Motor neuron (in vitro differentiated cells): ENCODE measurements at regions of chr18 and their contacts with region 1.

Region 1: DNA sequence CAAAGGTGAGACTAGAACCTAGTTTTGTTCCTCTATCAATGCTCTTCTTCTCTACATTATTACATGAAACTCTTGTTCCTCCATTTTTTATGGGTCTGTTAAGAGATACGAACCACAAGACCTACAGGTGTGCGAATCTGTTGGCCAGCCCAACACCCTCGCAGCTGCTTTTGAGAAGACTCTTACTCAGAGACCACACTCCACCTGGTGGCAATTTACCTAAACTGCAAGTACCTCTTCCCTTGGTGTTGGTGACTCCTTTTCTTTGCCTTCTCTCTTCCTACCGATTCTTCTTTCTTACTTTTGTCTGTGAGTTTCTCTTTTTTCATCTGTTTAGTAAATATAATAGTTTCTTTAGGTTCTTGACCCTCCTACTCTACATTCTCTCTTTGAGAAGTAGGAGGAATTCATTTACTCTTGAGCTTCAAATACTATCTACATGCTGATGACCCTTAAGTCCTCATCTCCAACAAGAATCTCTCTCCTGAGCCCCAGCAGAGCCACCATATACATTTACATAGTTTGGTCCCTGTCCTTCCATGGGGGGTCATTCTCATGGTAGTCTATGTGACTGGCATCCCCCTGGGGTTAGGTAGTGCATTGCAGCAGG is 81.8 kb upstream of the GAREM1 start:
- ATAC-seq: peak in 3 of 8 experiments; percentile 74 to 76 (median 75)
- H3K4me3 ChIP-seq: no peak overlapping the region
- H3K27ac ChIP-seq: no peak overlapping the region
- H3K4me1 ChIP-seq: peaks cover 0 to 6% of the 10 kb centered on the region in 2 donors

Region 2: DNA sequence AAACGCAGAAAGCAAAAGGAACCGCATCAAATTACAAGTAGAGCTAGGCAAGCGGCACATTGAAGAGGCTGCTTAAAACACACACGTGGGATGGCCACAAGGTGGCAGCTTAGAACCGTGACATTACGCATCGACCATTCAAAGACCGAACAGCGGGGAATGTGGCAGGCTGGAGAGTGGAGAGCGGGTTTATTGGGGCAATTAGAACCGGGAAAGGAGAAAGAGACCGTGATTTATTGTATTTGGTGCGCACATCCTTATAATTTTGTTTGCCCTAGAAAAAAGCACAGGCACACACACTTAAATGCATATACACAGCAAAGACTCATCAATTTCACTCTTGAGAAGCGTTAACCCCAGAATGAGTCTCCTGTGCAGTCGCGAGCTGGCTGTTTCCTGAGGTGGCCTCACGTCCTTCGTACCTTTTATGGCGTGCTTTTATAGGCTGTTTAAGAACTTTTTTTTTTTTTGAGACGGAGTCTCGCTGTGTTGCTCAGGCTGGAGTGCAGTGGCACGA is 394.4 kb before region 1 on chr18:
- in situ Hi-C with region 1: loop called in 5 of 9 experiments (anchors 10 to 25 kb)
- ATAC-seq: peak; percentile 98 to 100 (median 100)
- H3K4me3 ChIP-seq: peak overlapping the region; percentile 8 to 30 (median 16)
- H3K27ac ChIP-seq: no peak overlapping the region
- H3K4me1 ChIP-seq: no peaks in the 10 kb centered on the region

Region 3: GRCh38 chr18:32167975-32168730 is 384.4 kb before region 1 on chr18:
- in situ Hi-C with region 1: loop called in 5 of 9 experiments (anchors 10 to 25 kb)
- ATAC-seq: no peak
- H3K4me3 ChIP-seq: no peak overlapping the region
- H3K27ac ChIP-seq: no peak overlapping the region
- H3K4me1 ChIP-seq: no peaks in the 10 kb centered on the region

Region 4: DNA sequence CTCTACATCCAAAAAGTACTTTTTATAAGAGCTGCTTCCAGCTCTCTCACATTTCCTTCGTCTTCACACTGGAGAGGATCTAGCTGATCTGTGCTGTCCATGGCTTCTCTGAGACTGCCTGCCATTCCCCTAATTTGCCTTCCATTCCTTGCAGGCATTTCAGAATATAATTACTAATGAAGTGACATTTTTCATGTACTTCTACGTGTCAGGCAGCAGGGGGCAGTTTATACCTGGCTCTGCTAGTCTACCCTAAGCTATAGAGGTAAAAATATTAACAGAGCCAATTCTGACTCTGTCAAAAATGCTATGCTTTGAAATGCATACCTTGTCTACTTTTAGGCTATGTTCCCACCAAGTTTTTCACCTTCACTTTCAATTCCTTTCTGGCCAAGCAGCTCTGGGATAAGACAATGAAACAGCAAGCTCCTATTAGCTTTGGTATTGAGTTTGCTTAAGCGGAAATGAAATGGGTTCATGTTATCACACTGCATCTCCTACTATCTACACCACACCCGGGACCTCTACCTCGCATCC is 280.8 kb before region 1 on chr18:
- in situ Hi-C with region 1: loop called in 2 of 9 experiments (anchors 10 to 25 kb)
- ATAC-seq: peak in 6 of 8 experiments; percentile 32 to 91 (median 72)
- H3K4me3 ChIP-seq: no peak overlapping the region
- H3K27ac ChIP-seq: no peak overlapping the region
- H3K4me1 ChIP-seq: no peaks in the 10 kb centered on the region

Region 5: GRCh38 chr18:32289483-32290075 is 262.9 kb before region 1 on chr18:
- in situ Hi-C with region 1: loop called in 1 of 9 experiments (anchors 25 kb)
- ATAC-seq: peak; percentile 36 to 88 (median 75)
- H3K4me3 ChIP-seq: no peak overlapping the region
- H3K27ac ChIP-seq: no peak overlapping the region
- H3K4me1 ChIP-seq: no peaks in the 10 kb centered on the region